HepG2 (cell line): ENCODE measurements at regions of chr9 and their contacts with region 1.

Region 1: DNA sequence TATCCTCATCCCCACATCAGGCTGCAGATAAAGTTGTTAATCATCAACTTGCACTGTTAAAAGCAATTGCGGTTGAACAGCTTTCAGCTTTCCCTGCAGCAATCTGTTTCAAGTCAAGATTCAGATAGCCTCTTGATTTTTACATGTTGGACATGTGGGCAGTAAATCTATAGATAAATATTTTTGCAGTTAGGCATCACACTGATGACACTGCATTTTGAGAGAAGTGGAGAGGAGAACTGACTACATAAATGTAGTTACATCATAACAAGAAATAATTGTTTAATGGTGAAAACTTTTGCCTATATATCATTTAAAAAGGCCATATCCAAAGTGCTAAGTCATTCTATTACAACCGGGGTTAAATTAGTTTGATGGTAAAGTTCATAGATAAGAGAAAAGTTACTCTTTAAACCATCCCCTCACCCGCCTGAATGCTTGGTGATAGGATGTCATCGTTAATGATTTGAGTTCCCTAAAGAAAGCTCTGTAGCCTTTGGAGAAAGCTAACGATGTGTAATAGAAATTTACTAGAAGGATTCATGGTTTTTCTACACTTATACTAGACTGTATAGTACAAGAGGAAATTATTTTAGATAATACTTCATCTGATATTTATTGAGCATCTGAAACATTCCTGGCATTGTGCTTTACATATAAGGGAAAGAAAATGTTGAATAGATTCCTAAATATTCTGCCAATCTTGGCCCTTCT is 30.8 kb upstream of the ALDH1A1 start:
- DNase-seq: peak; percentile 87
- ATAC-seq: peak; percentile 90
- H3K4me3 ChIP-seq: peak overlapping the region in 2 of 3 experiments; percentile 40; a peak in 2 of 6 replicates
- H3K27ac ChIP-seq: peak overlapping the region; percentile 99
- H3K4me1 ChIP-seq: peaks cover 78% of the 10 kb centered on the region
- H3K27me3 ChIP-seq: no peaks in the 10 kb centered on the region
- CTCF ChIP-seq: no peak
- EP300 ChIP-seq: peak in 1 of 2 experiments; percentile 71; a peak in 2 of 4 replicates
- POLR2A ChIP-seq: peak in 1 of 2 experiments; percentile 54; a peak in 1 of 4 replicates
- RAD21 ChIP-seq: no peak

Region 2: DNA sequence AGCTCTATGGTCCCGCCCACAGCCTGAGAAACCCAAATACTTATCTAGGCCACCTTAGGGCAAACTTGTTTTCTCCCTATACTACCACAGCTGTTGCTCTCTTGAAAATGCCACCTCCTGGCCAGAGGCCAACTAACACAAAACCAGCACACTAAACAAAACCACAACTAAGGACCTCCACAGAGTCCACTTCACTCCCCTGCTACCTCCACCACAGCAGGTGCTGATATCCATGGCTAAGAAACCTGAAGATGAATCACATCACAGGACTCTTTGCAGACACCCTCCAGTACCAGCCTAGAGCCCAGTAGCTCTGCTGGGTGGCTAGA is 139.3 kb before region 1 on chr9:
- CTCF ChIA-PET with region 1: no interaction called
- POLR2A ChIA-PET with region 1: no interaction called
- in situ Hi-C with region 1: no loop called
- intact Hi-C with region 1: no loop called
- DNase-seq: no peak
- ATAC-seq: peak; percentile 58
- H3K4me3 ChIP-seq: peak overlapping the region in 1 of 3 experiments; percentile 49; a peak in 1 of 6 replicates
- H3K27ac ChIP-seq: no peak overlapping the region
- H3K4me1 ChIP-seq: peaks cover 16% of the 10 kb centered on the region
- H3K27me3 ChIP-seq: no peaks in the 10 kb centered on the region
- CTCF ChIP-seq: no peak
- EP300 ChIP-seq: no peak
- POLR2A ChIP-seq: no peak
- RAD21 ChIP-seq: no peak

Region 3: GRCh38 chr9:72997387-72997995 is 13.8 kb after region 1 on chr9:
- CTCF ChIA-PET with region 1: no interaction called
- POLR2A ChIA-PET with region 1: interaction called, 22 read pairs
- in situ Hi-C with region 1: no loop called
- intact Hi-C with region 1: no loop called
- DNase-seq: peak; percentile 93
- ATAC-seq: peak; percentile 99
- H3K4me3 ChIP-seq: peak overlapping the region; percentile 21 to 63 (median 26)
- H3K27ac ChIP-seq: peak overlapping the region; percentile 84
- H3K4me1 ChIP-seq: peaks cover 45% of the 10 kb centered on the region
- H3K27me3 ChIP-seq: no peaks in the 10 kb centered on the region
- CTCF ChIP-seq: no peak
- EP300 ChIP-seq: peak in 1 of 2 experiments; percentile 97; a peak in 2 of 4 replicates
- POLR2A ChIP-seq: peak; percentile 51 to 55; a peak in 2 of 4 replicates
- RAD21 ChIP-seq: no peak

Region 4: GRCh38 chr9:73116031-73116430 is 132.4 kb after region 1 on chr9:
- CTCF ChIA-PET with region 1: no interaction called
- POLR2A ChIA-PET with region 1: no interaction called
- in situ Hi-C with region 1: no loop called
- intact Hi-C with region 1: no loop called
- DNase-seq: no peak
- ATAC-seq: no peak
- H3K4me3 ChIP-seq: no peak overlapping the region
- H3K27ac ChIP-seq: no peak overlapping the region
- H3K4me1 ChIP-seq: no peaks in the 10 kb centered on the region
- H3K27me3 ChIP-seq: no peaks in the 10 kb centered on the region
- CTCF ChIP-seq: no peak
- EP300 ChIP-seq: no peak
- POLR2A ChIP-seq: no peak
- RAD21 ChIP-seq: no peak

Region 5: GRCh38 chr9:73527521-73527920 is 543.9 kb after region 1 on chr9:
- CTCF ChIA-PET with region 1: no interaction called
- POLR2A ChIA-PET with region 1: no interaction called
- in situ Hi-C with region 1: no loop called
- intact Hi-C with region 1: no loop called
- DNase-seq: no peak
- ATAC-seq: no peak
- H3K4me3 ChIP-seq: no peak overlapping the region
- H3K27ac ChIP-seq: no peak overlapping the region
- H3K4me1 ChIP-seq: no peaks in the 10 kb centered on the region
- H3K27me3 ChIP-seq: no peaks in the 10 kb centered on the region
- CTCF ChIP-seq: no peak
- EP300 ChIP-seq: no peak
- POLR2A ChIP-seq: no peak
- RAD21 ChIP-seq: no peak